IMR-90 (cell line): ENCODE measurements at regions of chr14 and their contacts with region 1.

Region 1: GRCh38 chr14:103185051-103185992 is 62.1 kb downstream of the TNFAIP2 start:
- DNase-seq: peak; percentile 38
- ATAC-seq: no peak
- H3K4me3 ChIP-seq: no peak overlapping the region
- H3K27ac ChIP-seq: no peak overlapping the region
- H3K4me1 ChIP-seq: no peaks in the 10 kb centered on the region
- H3K27me3 ChIP-seq: peaks cover 53% of the 10 kb centered on the region
- CTCF ChIP-seq: peak; percentile 66
- POLR2A ChIP-seq: no peak
- RAD21 ChIP-seq: peak; percentile 56

Region 2: DNA sequence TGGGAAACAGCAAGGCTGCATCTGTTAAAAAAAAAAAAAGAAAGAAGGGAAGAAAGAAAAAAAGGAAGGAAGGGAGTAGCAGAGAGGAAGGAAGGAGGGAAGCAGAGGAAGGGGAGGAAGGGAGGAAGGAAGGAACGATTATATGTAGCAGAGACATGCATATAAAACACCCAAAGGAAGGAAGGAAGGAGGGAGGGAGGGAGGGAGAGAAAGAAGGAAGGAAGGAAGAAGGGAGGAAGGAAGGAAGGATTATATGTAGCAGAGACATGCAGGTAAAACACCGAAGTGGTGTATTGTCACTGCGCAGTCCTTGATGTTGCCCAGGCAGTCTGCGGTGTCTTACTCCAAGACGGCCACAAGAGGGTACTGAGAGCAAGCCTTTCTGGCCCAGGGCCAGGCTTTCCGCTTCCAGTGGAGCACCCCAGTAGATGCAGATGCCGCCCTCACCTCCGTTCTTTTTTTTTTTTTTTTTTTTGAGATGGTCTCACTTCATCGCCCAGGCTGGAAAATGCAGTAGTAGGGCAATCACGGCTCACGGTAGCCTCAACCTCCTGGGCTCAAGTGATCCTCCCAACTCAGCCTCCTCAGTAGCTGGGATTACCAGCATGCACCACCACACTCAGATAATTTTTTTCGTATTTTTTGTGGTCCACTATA is 107.1 kb before region 1 on chr14:
- CTCF ChIA-PET with region 1: no interaction called
- POLR2A ChIA-PET with region 1: no interaction called
- dilution Hi-C with region 1: no loop called
- in situ Hi-C with region 1: no loop called
- intact Hi-C with region 1: loop called (anchors 10 kb)
- DNase-seq: peak; percentile 76
- ATAC-seq: peak; percentile 38; the same call in 1 of the 2 replicates
- H3K4me3 ChIP-seq: no peak overlapping the region
- H3K27ac ChIP-seq: no peak overlapping the region
- H3K4me1 ChIP-seq: peaks cover 2% of the 10 kb centered on the region; the same call in 1 of the 2 replicates
- H3K27me3 ChIP-seq: peaks cover 20% of the 10 kb centered on the region
- CTCF ChIP-seq: peak; percentile 75
- POLR2A ChIP-seq: no peak
- RAD21 ChIP-seq: peak; percentile 64

Region 3: GRCh38 chr14:103104654-103105452 is 80.5 kb before region 1 on chr14:
- CTCF ChIA-PET with region 1: interaction called, 21 read pairs
- POLR2A ChIA-PET with region 1: no interaction called
- dilution Hi-C with region 1: no loop called
- in situ Hi-C with region 1: no loop called
- intact Hi-C with region 1: loop called (anchors 1 kb)
- DNase-seq: peak; percentile 50
- ATAC-seq: peak; percentile 58
- H3K4me3 ChIP-seq: no peak overlapping the region
- H3K27ac ChIP-seq: no peak overlapping the region
- H3K4me1 ChIP-seq: peaks cover 15% of the 10 kb centered on the region
- H3K27me3 ChIP-seq: peaks cover 43% of the 10 kb centered on the region
- CTCF ChIP-seq: peak; percentile 88
- POLR2A ChIP-seq: no peak
- RAD21 ChIP-seq: peak; percentile 92

Region 4: GRCh38 chr14:103141119-103141796 is 44.1 kb before region 1 on chr14:
- CTCF ChIA-PET with region 1: no interaction called
- POLR2A ChIA-PET with region 1: interaction called, 4 read pairs
- dilution Hi-C with region 1: no loop called
- in situ Hi-C with region 1: no loop called
- intact Hi-C with region 1: loop called (anchors 5 kb)
- DNase-seq: peak; percentile 38
- ATAC-seq: no peak
- H3K4me3 ChIP-seq: no peak overlapping the region
- H3K27ac ChIP-seq: no peak overlapping the region
- H3K4me1 ChIP-seq: peaks cover 13% of the 10 kb centered on the region
- H3K27me3 ChIP-seq: peaks cover 7% of the 10 kb centered on the region; the same call in 1 of the 2 replicates
- CTCF ChIP-seq: peak; percentile 63
- POLR2A ChIP-seq: no peak
- RAD21 ChIP-seq: peak; percentile 49

Region 5: GRCh38 chr14:103281496-103282231 is 96.3 kb after region 1 on chr14:
- CTCF ChIA-PET with region 1: no interaction called
- POLR2A ChIA-PET with region 1: no interaction called
- dilution Hi-C with region 1: no loop called
- in situ Hi-C with region 1: no loop called
- intact Hi-C with region 1: loop called (anchors 5 kb)
- DNase-seq: peak; percentile 62
- ATAC-seq: peak; percentile 95
- H3K4me3 ChIP-seq: no peak overlapping the region
- H3K27ac ChIP-seq: no peak overlapping the region
- H3K4me1 ChIP-seq: peaks cover 4% of the 10 kb centered on the region; the same call in 1 of the 2 replicates
- H3K27me3 ChIP-seq: peaks cover 50% of the 10 kb centered on the region
- CTCF ChIP-seq: peak; percentile 61
- POLR2A ChIP-seq: no peak
- RAD21 ChIP-seq: peak; percentile 61

Region 6: DNA sequence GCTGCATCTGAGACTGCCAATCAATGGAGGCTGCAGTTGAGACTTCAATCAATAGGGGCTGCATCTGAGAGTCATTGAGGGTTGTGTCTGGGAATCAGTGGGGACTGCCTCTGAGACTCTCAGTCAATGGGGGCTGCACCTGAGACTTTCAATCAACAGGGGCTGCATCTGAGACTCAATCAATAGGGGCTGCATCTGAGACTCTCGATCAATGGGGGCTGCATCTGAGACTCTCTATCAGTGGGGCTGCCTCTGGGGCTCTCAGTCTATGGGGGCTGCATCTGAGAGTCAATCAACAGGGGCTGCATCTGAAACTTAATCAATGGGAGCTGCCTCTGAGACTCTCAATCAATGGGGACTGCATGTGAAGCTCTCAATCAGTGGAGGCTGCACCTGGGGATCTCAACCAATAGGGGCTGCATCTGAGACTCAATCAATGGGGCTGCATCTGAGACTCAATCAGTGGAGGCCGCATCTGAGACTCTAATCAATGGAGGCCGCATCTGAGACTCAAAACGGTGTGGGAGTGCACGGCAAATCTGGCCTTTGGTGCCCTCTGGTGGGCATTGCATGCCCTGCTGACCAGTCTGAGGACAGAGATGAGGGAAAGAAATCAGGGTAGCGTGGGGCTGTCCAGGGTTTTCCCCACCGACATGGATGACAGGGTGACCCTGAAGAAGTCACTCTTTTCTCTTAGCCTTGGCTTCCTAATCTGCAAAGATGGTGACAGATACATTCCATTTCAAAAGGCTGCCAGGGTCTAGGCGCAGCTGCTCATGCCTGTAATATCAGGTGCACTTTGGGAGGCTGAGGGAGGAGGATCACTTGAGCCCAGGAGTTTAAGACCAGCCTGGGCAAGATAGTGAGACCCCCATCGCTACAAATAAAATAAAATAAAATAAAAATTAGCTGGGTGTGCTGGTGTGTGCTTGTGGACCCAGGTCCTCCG is 107.4 kb after region 1 on chr14:
- CTCF ChIA-PET with region 1: no interaction called
- POLR2A ChIA-PET with region 1: no interaction called
- dilution Hi-C with region 1: no loop called
- in situ Hi-C with region 1: loop called (anchors 5 kb)
- intact Hi-C with region 1: no loop called
- DNase-seq: peak; percentile 53
- ATAC-seq: peak; percentile 93
- H3K4me3 ChIP-seq: no peak overlapping the region
- H3K27ac ChIP-seq: no peak overlapping the region
- H3K4me1 ChIP-seq: no peaks in the 10 kb centered on the region
- H3K27me3 ChIP-seq: peaks cover 40% of the 10 kb centered on the region
- CTCF ChIP-seq: peak; percentile 97
- POLR2A ChIP-seq: no peak
- RAD21 ChIP-seq: peak; percentile 97

Region 7: GRCh38 chr14:103427485-103428443 is 242.4 kb after region 1 on chr14:
- CTCF ChIA-PET with region 1: no interaction called
- POLR2A ChIA-PET with region 1: no interaction called
- dilution Hi-C with region 1: no loop called
- in situ Hi-C with region 1: no loop called
- intact Hi-C with region 1: no loop called
- DNase-seq: peak; percentile 85
- ATAC-seq: peak; percentile 52; the same call in 1 of the 2 replicates
- H3K4me3 ChIP-seq: no peak overlapping the region
- H3K27ac ChIP-seq: peak overlapping the region; percentile 29; the same call in 1 of the 2 replicates
- H3K4me1 ChIP-seq: peaks cover 17% of the 10 kb centered on the region
- H3K27me3 ChIP-seq: no peaks in the 10 kb centered on the region
- CTCF ChIP-seq: no peak
- POLR2A ChIP-seq: no peak
- RAD21 ChIP-seq: no peak